ENCODE measurements at regions of chr14 and their contacts with region 1.

Region 1: DNA sequence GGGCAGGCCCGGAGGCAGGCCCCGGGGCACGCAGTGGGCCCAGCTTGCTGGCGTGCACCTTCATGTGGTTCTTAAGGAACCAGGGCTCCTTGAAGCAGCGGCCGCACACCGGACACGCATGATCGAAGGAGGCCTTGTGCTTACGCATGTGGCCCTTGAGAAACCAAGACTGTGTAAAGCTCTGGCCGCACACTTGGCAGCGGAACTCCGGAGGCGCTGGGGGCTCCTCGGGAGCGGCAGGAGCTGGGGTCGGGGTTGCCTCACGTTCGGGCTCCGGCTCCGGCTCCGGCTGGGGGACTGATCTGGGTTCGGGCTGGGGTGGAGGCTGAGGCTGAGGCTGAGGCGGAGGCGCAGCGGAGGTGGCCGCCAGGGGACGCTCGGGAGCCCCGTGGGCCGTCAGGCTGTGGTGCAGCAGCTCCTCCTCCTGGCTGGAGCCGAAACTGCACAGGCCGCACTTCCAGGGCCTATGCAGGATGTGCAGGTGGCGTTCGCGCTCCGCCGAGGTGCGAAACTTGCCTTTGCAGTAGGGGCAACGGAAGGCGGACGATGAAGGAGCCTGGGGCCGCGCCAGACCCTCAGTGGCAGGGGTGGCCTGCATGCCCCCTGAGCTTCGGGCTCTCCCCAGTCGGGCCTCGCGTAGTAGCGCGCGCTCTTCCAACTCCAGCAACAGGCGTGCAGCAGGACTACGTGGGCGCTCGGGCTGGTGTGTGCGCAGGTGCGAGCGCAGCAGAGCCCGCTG is 6.0 kb downstream of the ZNF219 start:
- DNase-seq: peak; percentile 75 to 85 (median 81)
- H3K4me3 ChIP-seq: no peak overlapping the region
- H3K4me3 Mint-ChIP-seq: no peak overlapping the region
- H3K27ac ChIP-seq: no peak overlapping the region
- H3K27ac Mint-ChIP-seq: peak overlapping the region in 2 of 7 donors; percentile 15 to 84
- H3K4me1 ChIP-seq: peaks cover 9 to 20% of the 10 kb centered on the region in 2 donors
- H3K4me1 Mint-ChIP-seq: peaks cover 21% of the 10 kb centered on the region
- H3K27me3 ChIP-seq: no peaks in the 10 kb centered on the region
- H3K27me3 Mint-ChIP-seq: peaks cover 3 to 5% (median 3%) of the 10 kb centered on the region in 3 donors
- CTCF ChIP-seq: peak; percentile 100

Region 2: GRCh38 chr14:21024585-21025370 is 67.7 kb before region 1 on chr14 and contains the start of gene NDRG2:
- intact Hi-C with region 1: no loop called
- DNase-seq: peak in 1 of 3 donors; percentile 21
- H3K4me3 ChIP-seq: peak within 1 kb of the TSS; percentile 40 to 71 (median 43)
- H3K4me3 Mint-ChIP-seq: peak within 1 kb of the TSS; percentile 75 to 92
- H3K27ac ChIP-seq: no peak within 1 kb of the TSS
- H3K27ac Mint-ChIP-seq: peak within 1 kb of the TSS in 3 of 7 donors; percentile 8 to 61 (median 27)
- H3K4me1 ChIP-seq: peaks cover 38 to 45% of the 10 kb centered on the region in 2 donors
- H3K4me1 Mint-ChIP-seq: peaks cover 42% of the 10 kb centered on the region
- H3K27me3 ChIP-seq: peaks cover 15 to 37% of the 10 kb centered on the region in 2 donors
- H3K27me3 Mint-ChIP-seq: peaks cover 39 to 52% (median 43%) of the 10 kb centered on the region in 3 donors
- CTCF ChIP-seq: no peak
- polyA plus RNA-seq, gene NDRG2: 6.8 to 11.7 (median 11.1) TPM

Region 3: GRCh38 chr14:21071225-21072030 is 21.0 kb before region 1 on chr14:
- intact Hi-C with region 1: loop called (anchors 1 to 2 kb)
- DNase-seq: peak; percentile 89 to 91 (median 89)
- H3K4me3 ChIP-seq: peak overlapping the region; percentile 66 to 95 (median 83)
- H3K4me3 Mint-ChIP-seq: peak overlapping the region; percentile 91 to 94
- H3K27ac ChIP-seq: peak overlapping the region; percentile 90 to 94
- H3K27ac Mint-ChIP-seq: peak overlapping the region; percentile 92 to 99 (median 98)
- H3K4me1 ChIP-seq: peaks cover 40 to 45% of the 10 kb centered on the region in 2 donors
- H3K4me1 Mint-ChIP-seq: peaks cover 46% of the 10 kb centered on the region
- H3K27me3 ChIP-seq: peaks cover 0 to 11% of the 10 kb centered on the region in 2 donors
- H3K27me3 Mint-ChIP-seq: peaks cover 11 to 15% (median 14%) of the 10 kb centered on the region in 3 donors
- CTCF ChIP-seq: no peak

Measured in CD14-positive monocyte (primary cell).